ENCODE measurements at regions of chr3 and their contacts with region 1.

Region 1: DNA sequence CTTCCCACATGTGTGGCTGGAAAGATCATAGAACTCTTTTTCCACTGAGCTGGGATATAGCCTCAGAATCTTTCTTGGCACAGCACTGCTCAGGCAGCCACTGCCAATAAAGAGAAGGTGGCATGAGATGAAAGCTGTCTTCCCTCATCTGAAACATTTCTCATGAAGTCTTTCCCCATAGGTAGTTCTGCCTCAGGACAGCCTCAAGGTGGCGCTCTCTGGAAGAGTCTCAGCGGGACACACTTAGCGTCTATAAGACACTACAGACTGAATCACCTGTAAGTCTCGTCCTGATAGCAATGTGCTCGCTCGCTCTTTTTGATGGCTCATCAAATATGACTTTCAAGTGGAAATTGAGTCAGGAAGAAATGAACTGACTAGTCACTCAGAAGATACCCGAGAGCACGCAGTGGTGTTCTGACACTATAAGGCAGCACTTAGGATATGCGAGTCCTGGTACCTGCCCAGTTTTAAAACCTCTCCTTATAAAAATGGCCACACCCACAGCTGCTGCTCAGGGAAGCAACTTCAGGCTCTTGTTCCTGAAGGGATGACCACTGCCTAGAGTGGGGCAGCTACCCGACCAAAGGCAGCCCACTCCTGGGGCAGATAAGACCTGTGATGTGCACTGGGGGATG is 269.5 kb downstream of the SUCLG2 start:
- DNase-seq: peak; percentile 43 to 83
- H3K4me3 ChIP-seq: no peak overlapping the region
- H3K27ac ChIP-seq: no peak overlapping the region
- H3K4me1 ChIP-seq: peaks cover 0 to 8% (median 4%) of the 10 kb centered on the region in 4 experiments; a peak in 2 of 7 replicates
- H3K27me3 ChIP-seq: no peaks in the 10 kb centered on the region
- CTCF ChIP-seq: peak; percentile 77 to 95 (median 78)
- EP300 ChIP-seq: no peak
- POLR2A ChIP-seq: no peak
- RAD21 ChIP-seq: peak; percentile 81 to 85

Region 2: GRCh38 chr3:67357610-67358458 is 27.0 kb before region 1 on chr3:
- CTCF ChIA-PET with region 1: interaction called, 12 read pairs
- POLR2A ChIA-PET with region 1: no interaction called
- DNase-seq: peak; percentile 49 to 71
- H3K4me3 ChIP-seq: no peak overlapping the region
- H3K27ac ChIP-seq: no peak overlapping the region
- H3K4me1 ChIP-seq: peaks cover 0 to 5% (median under 1%) of the 10 kb centered on the region in 4 experiments; a peak in 3 of 7 replicates
- H3K27me3 ChIP-seq: no peaks in the 10 kb centered on the region
- CTCF ChIP-seq: peak; percentile 48 to 77 (median 56)
- EP300 ChIP-seq: no peak
- POLR2A ChIP-seq: no peak
- RAD21 ChIP-seq: peak; percentile 78 to 80

Region 3: GRCh38 chr3:67405193-67405592 is 20.3 kb after region 1 on chr3:
- CTCF ChIA-PET with region 1: interaction called, 10 read pairs
- POLR2A ChIA-PET with region 1: no interaction called
- DNase-seq: no peak
- H3K4me3 ChIP-seq: no peak overlapping the region
- H3K27ac ChIP-seq: no peak overlapping the region
- H3K4me1 ChIP-seq: no peaks in the 10 kb centered on the region
- H3K27me3 ChIP-seq: no peaks in the 10 kb centered on the region
- CTCF ChIP-seq: no peak
- EP300 ChIP-seq: no peak
- POLR2A ChIP-seq: no peak
- RAD21 ChIP-seq: no peak

Region 4: DNA sequence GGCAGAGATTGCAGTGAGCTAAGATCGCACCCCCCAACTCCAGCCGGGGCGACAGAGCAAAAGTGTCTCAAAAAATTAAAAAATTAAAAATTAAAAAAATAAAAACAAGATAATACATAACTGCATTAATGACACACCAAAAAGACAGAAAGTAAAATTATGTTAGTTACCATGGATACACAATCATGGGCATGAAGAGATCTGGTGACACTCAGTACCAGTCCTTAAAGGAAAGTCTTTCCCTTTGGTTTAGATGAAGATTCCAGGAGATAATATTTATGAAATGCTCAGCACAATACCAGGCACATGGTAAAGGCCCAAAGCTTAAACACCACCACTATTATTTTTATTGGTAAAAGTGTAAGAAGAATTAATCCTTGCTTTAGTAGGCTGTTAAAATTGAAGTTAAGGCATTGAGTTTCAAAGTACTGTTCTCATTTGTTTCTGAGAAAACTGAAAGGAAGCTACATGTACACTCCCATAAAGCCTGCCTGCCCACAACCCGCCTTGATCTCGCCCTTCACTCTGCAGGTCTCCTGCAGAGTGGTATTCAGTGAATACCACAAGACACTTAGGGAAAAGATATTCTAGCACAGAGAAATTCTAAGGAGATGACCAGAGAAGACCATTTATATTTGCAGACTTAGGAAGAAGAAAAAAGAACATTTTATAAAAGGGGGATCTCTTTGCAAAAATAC is 217.2 kb after region 1 on chr3:
- CTCF ChIA-PET with region 1: interaction called, 11 read pairs
- POLR2A ChIA-PET with region 1: no interaction called
- DNase-seq: no peak
- H3K4me3 ChIP-seq: no peak overlapping the region
- H3K27ac ChIP-seq: no peak overlapping the region
- H3K4me1 ChIP-seq: peaks cover 0 to 3% (median 0%) of the 10 kb centered on the region in 4 experiments; a peak in 1 of 7 replicates
- H3K27me3 ChIP-seq: no peaks in the 10 kb centered on the region
- CTCF ChIP-seq: no peak
- EP300 ChIP-seq: no peak
- POLR2A ChIP-seq: no peak
- RAD21 ChIP-seq: no peak

Region 5: DNA sequence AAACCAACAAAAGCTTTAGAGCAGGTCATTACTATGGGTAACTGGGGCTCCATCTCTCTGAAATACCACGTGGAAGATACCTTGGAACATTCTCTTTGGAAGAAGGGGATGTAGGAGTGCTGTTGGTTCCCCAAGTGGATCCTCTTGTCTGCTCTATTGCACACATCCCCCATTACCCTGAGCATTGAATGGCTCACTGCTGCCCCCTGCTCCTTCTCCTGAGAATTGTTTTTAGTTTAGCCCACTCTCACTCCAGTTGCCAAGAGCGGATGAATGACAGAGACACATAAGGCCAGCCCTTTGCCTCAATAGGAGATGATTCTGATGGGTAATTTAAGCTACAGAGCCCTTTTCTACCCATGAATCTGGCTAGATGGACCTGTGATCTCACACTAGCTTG is 405.2 kb after region 1 on chr3:
- CTCF ChIA-PET with region 1: interaction called, 66 read pairs
- POLR2A ChIA-PET with region 1: no interaction called
- DNase-seq: peak; percentile 53 to 90
- H3K4me3 ChIP-seq: no peak overlapping the region
- H3K27ac ChIP-seq: no peak overlapping the region
- H3K4me1 ChIP-seq: no peaks in the 10 kb centered on the region
- H3K27me3 ChIP-seq: no peaks in the 10 kb centered on the region
- CTCF ChIP-seq: peak; percentile 52 to 87 (median 86)
- EP300 ChIP-seq: no peak
- POLR2A ChIP-seq: no peak
- RAD21 ChIP-seq: peak; percentile 95

Measured in H1 (cell line).